Testis (tissue), 5 donors: ENCODE measurements at regions of chr21 and their contacts with region 1.

Region 1: DNA sequence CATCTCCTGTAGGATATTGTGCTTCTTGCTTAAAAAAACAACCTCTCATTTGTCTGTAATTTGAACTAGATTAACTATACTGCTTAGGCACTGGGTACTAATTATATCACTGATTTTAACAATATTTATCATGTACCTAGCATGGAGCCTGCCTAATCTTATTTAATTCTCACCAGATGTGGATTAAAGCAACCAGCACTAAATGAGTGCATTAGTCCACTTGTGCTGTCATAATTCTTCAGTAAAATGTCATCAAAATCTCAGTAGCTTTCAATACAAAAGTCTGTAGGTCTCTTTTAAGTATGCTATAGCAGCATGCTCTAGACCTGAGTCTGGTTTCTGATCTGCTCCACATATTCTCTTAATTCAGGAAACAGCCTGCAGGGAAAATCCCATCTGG is 368.1 kb downstream of the NCAM2 start:
- DNase-seq: no peak
- H3K4me3 ChIP-seq: no peak overlapping the region
- H3K27ac ChIP-seq: no peak overlapping the region
- H3K4me1 ChIP-seq: no peaks in the 10 kb centered on the region
- H3K27me3 ChIP-seq: no peaks in the 10 kb centered on the region
- CTCF ChIP-seq: no peak
- POLR2A ChIP-seq: no peak

Region 2: DNA sequence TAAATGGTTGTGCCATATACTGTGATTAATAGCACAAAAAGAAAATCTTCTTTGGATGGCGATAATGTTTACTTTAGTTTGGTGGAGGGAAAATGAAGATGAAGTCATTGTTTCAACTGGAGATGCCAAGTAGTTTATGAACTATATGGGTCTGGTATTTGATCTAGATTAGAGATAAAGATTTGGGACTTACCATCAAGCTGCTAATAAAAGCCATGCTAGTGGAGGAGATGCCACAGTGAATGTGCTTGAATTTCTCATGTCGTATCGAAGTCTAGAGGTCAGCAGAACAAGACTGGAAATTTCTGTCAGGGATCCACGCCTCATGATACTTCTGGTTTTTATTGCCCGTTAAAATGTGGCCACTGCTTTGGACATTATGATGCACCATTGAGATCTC is 373.9 kb after region 1 on chr21:
- intact Hi-C with region 1: loop called (anchors 10 kb)
- DNase-seq: no peak
- H3K4me3 ChIP-seq: no peak overlapping the region
- H3K27ac ChIP-seq: no peak overlapping the region
- H3K4me1 ChIP-seq: no peaks in the 10 kb centered on the region
- H3K27me3 ChIP-seq: no peaks in the 10 kb centered on the region
- CTCF ChIP-seq: no peak
- POLR2A ChIP-seq: no peak